ENCODE measurements at regions of chr4 and their contacts with region 1.

Region 1: GRCh38 chr4:98928505-98929340 is at the start of gene EIF4E:
- DNase-seq: peak; percentile 97 to 99
- ATAC-seq: peak; percentile 85 to 87
- H3K4me3 ChIP-seq: peak within 1 kb of the TSS; percentile 86 to 99 (median 93)
- H3K27ac ChIP-seq: peak within 1 kb of the TSS; percentile 98 to 100 (median 98)
- H3K4me1 ChIP-seq: peaks cover 19 to 32% of the 10 kb centered on the region in 2 donors
- H3K27me3 ChIP-seq: no peaks in the 10 kb centered on the region
- CTCF ChIP-seq: peak in 2 of 5 experiments; percentile 7 to 30
- POLR2A ChIP-seq: peak; percentile 70 to 74
- total RNA-seq, gene EIF4E: 35.7 to 67.5 (median 56.0) TPM

Region 2: DNA sequence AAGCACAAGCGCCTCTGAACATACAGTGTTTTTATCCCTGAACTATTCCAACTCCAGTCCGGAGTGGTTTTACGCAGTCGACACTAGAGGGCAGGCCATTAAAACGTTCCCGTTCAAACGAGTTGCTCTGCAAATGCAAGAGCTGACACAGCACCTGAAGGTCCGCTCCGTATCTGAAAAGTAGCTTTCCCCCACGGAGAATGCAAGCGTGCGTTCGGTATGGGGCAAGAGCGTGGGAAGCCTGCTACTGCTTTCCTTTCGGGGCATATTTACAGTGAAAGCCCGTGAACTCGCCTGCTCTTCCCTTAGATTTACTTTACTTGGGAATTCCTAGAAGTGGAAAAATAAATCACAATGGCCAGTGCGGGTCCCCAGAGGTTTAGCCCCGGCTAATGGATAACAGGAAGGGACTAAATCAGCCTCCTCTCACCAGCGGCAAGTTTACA is 461.1 kb before region 1 on chr4:
- in situ Hi-C with region 1: loop called in 1 of 4 experiments (anchors 25 kb)
- intact Hi-C with region 1: no loop called
- DNase-seq: peak; percentile 46 to 56
- ATAC-seq: peak; percentile 93 to 99
- H3K4me3 ChIP-seq: peak overlapping the region; percentile 32 to 61 (median 47)
- H3K27ac ChIP-seq: no peak overlapping the region
- H3K4me1 ChIP-seq: peaks cover 3 to 5% of the 10 kb centered on the region in 2 donors
- H3K27me3 ChIP-seq: no peaks in the 10 kb centered on the region
- CTCF ChIP-seq: peak; percentile 38 to 73 (median 66)
- POLR2A ChIP-seq: no peak

Region 3: DNA sequence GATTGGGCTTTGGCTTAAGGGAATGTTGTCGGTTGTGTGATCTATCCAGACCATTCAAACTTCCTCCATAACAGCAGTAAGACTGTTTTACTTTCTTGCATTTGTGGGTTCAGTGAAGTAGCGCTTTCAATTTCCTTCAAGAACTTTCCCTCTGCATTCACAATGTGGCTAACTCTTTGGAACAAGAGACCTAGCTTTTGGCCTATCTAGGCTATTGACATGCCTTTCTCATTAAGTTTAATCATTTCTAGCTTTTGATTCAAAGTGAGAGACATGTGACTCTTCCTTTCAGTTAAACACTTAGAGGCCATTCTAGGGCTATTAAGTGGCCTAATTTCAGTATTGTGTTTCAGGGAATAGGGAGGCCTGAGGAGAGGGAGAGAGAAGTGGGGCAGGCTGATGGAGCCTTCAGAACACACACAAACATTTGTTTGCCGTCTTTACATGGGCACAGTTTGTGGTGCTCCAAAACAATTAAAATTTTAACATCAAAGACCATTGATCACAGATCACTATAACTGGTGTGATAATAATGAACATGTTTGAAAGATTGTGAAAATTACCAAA is 125.8 kb after region 1 on chr4:
- in situ Hi-C with region 1: loop called in 2 of 4 experiments (anchors 25 kb)
- intact Hi-C with region 1: no loop called
- DNase-seq: no peak
- ATAC-seq: no peak
- H3K4me3 ChIP-seq: no peak overlapping the region
- H3K27ac ChIP-seq: no peak overlapping the region
- H3K4me1 ChIP-seq: no peaks in the 10 kb centered on the region
- H3K27me3 ChIP-seq: no peaks in the 10 kb centered on the region
- CTCF ChIP-seq: no peak
- POLR2A ChIP-seq: no peak

Region 4: GRCh38 chr4:99324979-99325378 is 396.3 kb after region 1 on chr4:
- in situ Hi-C with region 1: no loop called
- intact Hi-C with region 1: loop called (anchors 5 kb)
- DNase-seq: peak; percentile 81 to 82
- ATAC-seq: peak; percentile 83 to 87
- H3K4me3 ChIP-seq: no peak overlapping the region
- H3K27ac ChIP-seq: peak overlapping the region; percentile 88 to 93 (median 92)
- H3K4me1 ChIP-seq: peaks cover 34% of the 10 kb centered on the region in 2 donors
- H3K27me3 ChIP-seq: no peaks in the 10 kb centered on the region
- CTCF ChIP-seq: no peak
- POLR2A ChIP-seq: no peak

Region 5: GRCh38 chr4:99894161-99894997 is 965.7 kb after region 1 on chr4 and contains the start of gene LAMTOR3:
- in situ Hi-C with region 1: no loop called
- intact Hi-C with region 1: loop called (anchors 10 kb)
- DNase-seq: peak; percentile 88 to 91
- ATAC-seq: peak; percentile 99
- H3K4me3 ChIP-seq: peak within 1 kb of the TSS; percentile 85 to 95 (median 89)
- H3K27ac ChIP-seq: peak within 1 kb of the TSS; percentile 85 to 92 (median 88)
- H3K4me1 ChIP-seq: peaks cover 16 to 21% of the 10 kb centered on the region in 2 donors
- H3K27me3 ChIP-seq: no peaks in the 10 kb centered on the region
- CTCF ChIP-seq: no peak
- POLR2A ChIP-seq: peak; percentile 29 to 33
- total RNA-seq, gene LAMTOR3: 20.8 to 31.1 (median 28.9) TPM